Left cardiac atrium (tissue), 4 donors: ENCODE measurements at regions of chr11 and their contacts with region 1.

Region 1: DNA sequence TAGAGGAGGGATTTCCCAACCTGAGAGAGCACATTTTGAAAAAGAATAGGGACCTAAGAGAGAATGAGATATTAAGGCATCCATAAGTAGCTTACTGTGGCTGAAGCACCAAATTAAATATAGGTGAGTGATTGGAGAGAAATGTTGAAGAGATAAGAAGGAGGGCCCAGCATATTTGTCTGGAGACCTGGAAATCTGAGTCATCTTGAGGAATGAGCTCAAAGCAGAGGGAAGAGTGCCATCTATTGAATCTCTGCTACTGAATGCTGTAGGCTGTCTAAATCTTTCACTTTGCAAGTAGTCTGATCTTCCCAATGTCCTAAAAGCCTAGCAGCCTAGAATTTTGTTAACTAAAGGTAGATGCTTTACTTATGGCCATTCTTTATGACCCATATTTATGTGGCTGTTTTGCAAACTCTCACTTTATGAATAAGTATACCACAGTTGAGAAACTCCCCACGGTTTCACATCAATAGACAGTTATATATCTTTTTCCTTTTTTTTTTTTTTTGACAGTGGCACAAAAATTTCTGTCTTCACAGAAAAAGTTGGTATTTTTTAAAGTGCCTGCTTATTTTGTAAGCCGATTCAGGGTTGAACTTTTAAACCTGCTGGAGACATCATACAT is 2093.5 kb downstream of the LRRC4C start:
- DNase-seq: no peak
- ATAC-seq: peak in 1 of 2 donors; percentile 77

Region 2: GRCh38 chr11:38296211-38296776 is 1069.6 kb before region 1 on chr11:
- intact Hi-C with region 1: no loop called
- DNase-seq: no peak
- ATAC-seq: no peak

Region 3: DNA sequence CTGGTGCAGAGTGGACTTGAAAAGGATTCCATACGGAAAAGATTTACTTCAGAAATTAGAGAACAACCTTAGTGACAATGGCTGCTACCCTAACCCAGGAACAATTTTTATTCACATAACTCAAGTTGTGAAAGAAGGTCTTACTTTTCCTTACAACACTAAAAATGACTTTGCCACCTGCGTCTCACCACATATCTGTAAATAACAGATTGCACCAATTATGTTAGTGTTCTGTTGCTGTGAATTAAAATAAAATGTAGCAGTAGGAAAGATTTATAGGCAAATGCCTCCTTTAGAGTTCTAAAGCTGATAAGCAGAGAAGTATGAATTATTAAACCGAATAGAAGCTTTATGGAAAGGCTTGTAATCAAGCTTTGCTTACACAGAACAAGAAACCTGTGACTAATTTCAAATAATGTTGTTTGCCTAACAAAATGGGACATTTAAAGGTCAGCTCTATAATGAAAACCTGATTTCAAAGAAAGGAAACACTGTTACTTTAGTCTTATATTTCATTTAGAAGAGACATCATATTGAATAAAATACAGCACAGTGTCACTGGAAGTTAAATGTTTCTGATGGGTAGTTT is 144.3 kb before region 1 on chr11:
- intact Hi-C with region 1: no loop called
- DNase-seq: no peak
- ATAC-seq: no peak

Region 4: DNA sequence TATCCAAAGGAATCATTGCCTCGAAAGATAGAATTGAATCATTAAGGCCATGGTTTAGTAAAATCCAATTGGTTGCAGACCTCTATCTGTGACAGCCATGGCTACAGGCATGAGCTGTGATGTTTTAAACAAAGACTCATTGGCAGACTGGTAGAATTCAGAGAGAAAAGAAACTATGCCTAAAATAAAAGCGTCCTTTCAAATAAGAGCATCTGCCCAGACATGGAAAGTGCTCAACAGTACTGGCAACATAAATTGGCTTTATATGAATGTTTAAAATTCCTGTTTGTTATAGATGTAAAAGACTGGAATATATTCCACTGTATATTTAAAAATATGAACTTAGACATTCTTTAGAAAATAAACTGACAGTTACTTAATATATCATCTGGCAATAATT is 59.3 kb after region 1 on chr11:
- intact Hi-C with region 1: loop called in 1 of 2 experiments (anchors 10 kb)
- DNase-seq: no peak
- ATAC-seq: no peak